ENCODE measurements at regions of chr2 and their contacts with region 1.

Region 1: DNA sequence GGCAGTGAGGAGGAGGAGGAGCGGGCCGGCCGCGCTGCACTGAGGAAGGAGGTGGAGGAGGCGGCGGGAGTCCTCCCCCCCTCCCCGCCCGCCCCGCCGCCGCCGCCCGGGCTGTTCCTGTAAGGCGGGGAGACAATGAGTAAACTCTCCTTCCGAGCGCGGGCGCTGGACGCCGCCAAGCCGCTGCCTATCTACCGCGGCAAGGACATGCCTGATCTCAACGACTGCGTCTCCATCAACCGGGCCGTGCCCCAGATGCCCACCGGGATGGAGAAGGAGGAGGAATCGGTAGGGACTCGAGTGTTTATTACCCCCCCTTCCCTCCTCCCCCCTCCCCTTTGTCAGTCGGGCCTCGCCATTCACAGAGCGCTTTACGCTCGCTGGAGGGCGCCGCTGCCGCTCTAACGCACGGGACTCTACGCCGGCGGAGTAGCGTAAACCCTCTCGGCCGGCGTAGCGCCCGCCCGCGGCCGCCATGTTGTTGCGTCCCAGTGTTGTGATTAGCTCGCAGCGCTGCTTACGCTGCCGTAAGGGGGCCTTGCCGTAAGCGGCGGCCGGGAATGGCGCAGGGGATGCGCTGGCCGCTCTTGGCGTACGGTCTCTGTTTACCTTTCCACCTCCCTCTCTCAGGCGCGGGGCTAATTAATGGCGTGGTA is 460 bp downstream of the EPC2 start:
- DNase-seq: peak; percentile 98

Region 2: GRCh38 chr2:148020111-148021058 is 624.6 kb before region 1 on chr2 and contains the start of gene ORC4:
- intact Hi-C with region 1: loop called (anchors 1 kb)
- DNase-seq: peak; percentile 99
- total RNA-seq, gene ORC4: 35.1 TPM

Region 3: GRCh38 chr2:148614322-148615049 is 30.5 kb before region 1 on chr2:
- intact Hi-C with region 1: loop called (anchors 1 kb)
- DNase-seq: no peak

Region 4: DNA sequence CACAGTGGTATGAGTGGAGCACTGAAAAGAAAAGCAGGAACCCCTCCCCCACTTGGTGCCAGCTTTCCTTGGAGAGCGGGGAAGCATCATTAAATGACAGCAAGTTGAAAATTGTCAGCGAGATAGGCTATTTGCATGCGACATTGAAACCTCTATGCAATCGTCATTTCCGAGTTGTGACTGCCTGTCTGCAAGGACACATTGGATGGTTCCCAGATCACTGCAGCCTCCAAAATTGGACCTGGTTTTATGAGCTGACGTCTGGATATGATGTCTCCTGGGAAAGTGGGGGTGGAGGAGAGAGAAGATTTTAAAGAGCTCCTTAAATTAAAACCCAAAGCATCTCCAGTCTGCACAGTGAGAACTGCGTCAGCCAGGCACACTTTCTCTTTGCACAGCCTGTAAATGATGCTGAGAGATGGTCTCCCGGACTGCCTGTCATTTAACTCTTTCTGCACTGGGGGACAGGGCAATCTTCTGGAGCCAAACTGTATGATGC is 172.2 kb after region 1 on chr2:
- intact Hi-C with region 1: loop called (anchors 5 kb)
- DNase-seq: no peak

Region 5: DNA sequence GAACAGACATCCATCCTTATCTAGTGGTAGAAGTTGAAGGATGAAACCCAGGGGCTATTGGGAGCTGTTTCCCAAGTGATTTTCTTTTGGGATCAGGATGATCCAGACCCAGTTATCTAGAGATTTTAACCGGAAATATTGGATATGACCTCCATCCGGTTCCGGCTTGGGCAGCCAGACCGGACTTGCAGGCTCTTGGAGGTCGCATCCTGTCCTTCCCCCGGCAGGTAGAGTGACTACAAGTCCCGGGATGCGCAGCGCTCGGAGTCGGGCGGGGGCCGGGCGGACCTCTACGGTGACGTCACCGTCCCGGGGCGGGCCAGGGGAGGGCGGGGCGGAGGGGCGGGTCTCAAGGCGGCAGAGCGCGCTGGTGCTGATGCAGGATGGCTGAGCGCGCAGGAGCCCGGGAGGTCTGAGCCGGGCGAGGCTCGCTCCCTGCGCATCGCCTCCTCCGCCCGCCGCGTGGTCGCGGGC is 229.9 kb after region 1 on chr2 and contains the start of gene KIF5C:
- intact Hi-C with region 1: loop called (anchors 10 kb)
- DNase-seq: peak; percentile 90
- total RNA-seq, gene KIF5C: 0.73 TPM

Region 6: DNA sequence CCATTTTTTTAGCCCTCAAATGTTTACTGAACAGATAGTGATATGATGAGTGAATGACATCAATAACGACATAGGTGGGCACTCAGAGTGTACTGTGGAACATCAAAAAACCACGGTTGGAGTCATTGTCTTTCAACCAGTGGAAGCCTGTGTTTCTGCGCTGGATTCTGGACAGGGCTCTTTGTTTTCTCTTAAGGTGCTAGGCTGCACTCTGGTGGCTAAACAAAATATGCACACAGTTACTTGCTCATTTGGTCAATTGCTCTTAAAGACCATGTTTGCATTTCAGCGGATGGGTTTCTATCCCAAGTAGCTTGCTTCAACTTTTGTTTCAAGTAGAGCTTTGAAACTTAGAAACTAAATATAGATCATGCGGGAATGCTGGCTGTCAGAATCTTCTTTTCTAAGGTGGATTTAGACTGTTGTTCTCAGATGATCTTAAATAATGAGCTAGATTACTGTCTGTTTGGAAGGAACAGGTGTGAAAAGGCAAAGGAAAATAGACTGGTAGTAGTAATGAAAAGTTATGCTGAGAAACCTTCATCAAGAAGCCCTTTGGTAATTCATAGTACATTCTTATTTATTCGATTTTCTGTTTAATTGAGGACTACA is 345.0 kb after region 1 on chr2:
- intact Hi-C with region 1: loop called (anchors 5 kb)
- DNase-seq: no peak

Region 7: DNA sequence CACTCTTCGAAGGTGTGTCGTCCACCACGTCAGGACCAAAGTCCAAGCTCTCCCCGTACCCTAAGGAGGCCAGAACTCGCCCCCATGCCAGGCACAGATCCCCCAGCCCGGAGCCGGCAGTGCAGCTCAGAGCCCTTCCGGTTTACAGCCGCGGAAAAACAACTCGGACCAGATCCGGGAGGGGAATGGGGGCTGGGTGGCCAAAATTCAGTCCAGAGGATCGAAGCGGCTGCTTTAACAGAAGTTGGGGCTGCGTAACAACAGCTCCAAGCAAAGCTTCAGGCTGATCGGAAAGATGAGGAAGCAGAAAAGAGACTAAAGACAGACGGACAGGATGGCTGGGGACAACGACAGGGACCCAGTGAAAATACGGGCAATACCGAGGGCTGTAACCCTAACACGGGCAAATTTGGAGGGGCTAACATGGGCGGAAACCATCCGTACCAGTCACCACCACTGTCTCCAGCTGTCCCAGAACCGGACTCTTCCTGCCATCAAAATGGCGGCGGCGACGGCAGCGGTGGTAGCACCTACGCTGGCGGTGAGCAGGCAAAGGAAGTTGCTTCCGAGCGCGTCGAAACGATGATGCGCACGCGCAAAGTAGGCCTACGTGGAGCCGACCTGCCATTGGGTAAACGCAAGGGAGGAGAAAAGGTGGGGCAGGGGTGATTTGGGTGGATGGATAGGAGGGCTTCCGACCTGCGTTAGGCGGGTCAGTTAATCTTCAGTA is 942.4 kb after region 1 on chr2 and contains the start of gene MMADHC:
- intact Hi-C with region 1: loop called (anchors 10 kb)
- DNase-seq: peak; percentile 97
- total RNA-seq, gene MMADHC: 117 TPM

Measured in cardiac septum (tissue), 1 donor.